A673 (cell line): ENCODE measurements at regions of chr18 and their contacts with region 1.

Region 1: GRCh38 chr18:33231474-33232317 is 208.8 kb downstream of the CCDC178 start:
- DNase-seq: peak; percentile 77
- H3K4me3 ChIP-seq: no peak overlapping the region
- H3K27ac ChIP-seq: no peak overlapping the region
- H3K4me1 ChIP-seq: no peaks in the 10 kb centered on the region
- H3K27me3 ChIP-seq: no peaks in the 10 kb centered on the region
- CTCF ChIP-seq: peak; percentile 94

Region 2: GRCh38 chr18:33330711-33331110 is 99.0 kb after region 1 on chr18:
- CTCF ChIA-PET with region 1: no interaction called
- POLR2A ChIA-PET with region 1: no interaction called
- intact Hi-C with region 1: no loop called
- DNase-seq: no peak
- H3K4me3 ChIP-seq: no peak overlapping the region
- H3K27ac ChIP-seq: no peak overlapping the region
- H3K4me1 ChIP-seq: no peaks in the 10 kb centered on the region
- H3K27me3 ChIP-seq: no peaks in the 10 kb centered on the region
- CTCF ChIP-seq: no peak

Region 3: DNA sequence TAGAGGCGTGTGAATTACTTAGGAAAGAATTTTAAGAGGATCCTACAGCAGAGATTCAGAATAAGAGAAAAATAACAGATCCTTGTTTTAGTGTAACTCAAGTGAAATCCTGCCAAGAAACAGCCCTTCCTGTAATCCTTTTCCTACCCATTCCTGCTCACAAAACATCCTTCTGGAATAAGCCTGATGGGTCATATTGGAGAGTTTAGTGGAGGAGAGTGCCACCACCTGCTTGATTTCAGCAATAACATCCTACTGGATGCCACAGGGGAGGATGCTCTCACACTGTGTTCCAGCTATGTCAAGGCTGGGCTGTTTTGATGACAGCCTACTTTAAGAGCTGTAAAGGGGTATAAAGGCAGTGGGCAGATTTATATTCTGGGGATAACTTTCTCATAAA is 263.6 kb after region 1 on chr18:
- CTCF ChIA-PET with region 1: no interaction called
- POLR2A ChIA-PET with region 1: no interaction called
- intact Hi-C with region 1: loop called (anchors 2 kb)
- DNase-seq: peak; percentile 35
- H3K4me3 ChIP-seq: no peak overlapping the region
- H3K27ac ChIP-seq: no peak overlapping the region
- H3K4me1 ChIP-seq: no peaks in the 10 kb centered on the region
- H3K27me3 ChIP-seq: no peaks in the 10 kb centered on the region
- CTCF ChIP-seq: peak; percentile 59

Region 4: DNA sequence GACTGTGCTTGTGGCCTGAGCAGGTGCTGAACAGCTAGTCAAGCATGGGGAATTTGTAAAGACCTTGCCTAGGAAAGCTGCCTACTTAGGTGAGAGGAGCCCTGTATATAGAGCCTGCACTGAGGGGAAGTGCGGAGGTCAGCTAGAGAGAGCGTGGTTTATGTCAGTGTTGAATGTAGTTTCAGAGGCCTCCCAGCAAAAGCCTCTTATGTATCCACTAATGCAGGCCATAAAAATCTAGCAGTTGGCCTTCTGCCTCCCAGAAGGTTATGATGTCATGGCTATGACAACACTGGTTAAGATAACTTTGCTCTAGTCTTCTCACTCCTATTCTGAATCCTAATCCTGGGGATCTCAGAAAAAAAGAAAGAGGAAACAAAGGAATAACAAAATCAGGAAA is 435.2 kb after region 1 on chr18:
- CTCF ChIA-PET with region 1: no interaction called
- POLR2A ChIA-PET with region 1: no interaction called
- intact Hi-C with region 1: loop called (anchors 10 kb)
- DNase-seq: no peak
- H3K4me3 ChIP-seq: no peak overlapping the region
- H3K27ac ChIP-seq: no peak overlapping the region
- H3K4me1 ChIP-seq: no peaks in the 10 kb centered on the region
- H3K27me3 ChIP-seq: no peaks in the 10 kb centered on the region
- CTCF ChIP-seq: no peak

Region 5: DNA sequence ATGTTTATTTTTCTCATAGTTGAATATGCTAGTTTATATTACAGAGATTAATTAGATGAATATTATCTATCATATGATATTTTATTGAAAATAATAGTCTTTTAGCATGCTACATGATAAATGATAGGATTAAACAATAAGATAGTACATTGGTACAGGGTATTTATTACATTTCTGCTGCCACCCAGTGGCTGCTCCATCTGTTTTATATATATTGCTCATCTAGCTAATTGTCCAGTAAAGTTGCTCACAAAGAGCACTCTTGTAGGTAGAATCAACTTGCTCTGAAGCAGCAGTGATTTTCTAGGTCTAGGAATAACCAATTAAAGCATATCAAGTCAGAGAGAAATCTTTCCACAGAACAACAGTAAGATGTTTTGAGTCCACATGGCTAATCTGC is 529.7 kb after region 1 on chr18:
- CTCF ChIA-PET with region 1: interaction called, 3 read pairs
- POLR2A ChIA-PET with region 1: no interaction called
- intact Hi-C with region 1: loop called (anchors 2 kb)
- DNase-seq: peak; percentile 27
- H3K4me3 ChIP-seq: no peak overlapping the region
- H3K27ac ChIP-seq: no peak overlapping the region
- H3K4me1 ChIP-seq: no peaks in the 10 kb centered on the region
- H3K27me3 ChIP-seq: peaks cover 7% of the 10 kb centered on the region
- CTCF ChIP-seq: peak; percentile 56